GM10248 (cell line): ENCODE measurements at regions of chr6 and their contacts with region 1.

Region 1: GRCh38 chr6:26196846-26197648 is 109.8 kb downstream of the HFE start:
- DNase-seq: peak; percentile 87
- CTCF ChIP-seq: peak; percentile 11

Region 2: GRCh38 chr6:25743868-25744267 is 453.2 kb before region 1 on chr6:
- CTCF ChIA-PET with region 1: no interaction called
- POLR2A ChIA-PET with region 1: no interaction called
- DNase-seq: no peak
- CTCF ChIP-seq: no peak

Region 3: DNA sequence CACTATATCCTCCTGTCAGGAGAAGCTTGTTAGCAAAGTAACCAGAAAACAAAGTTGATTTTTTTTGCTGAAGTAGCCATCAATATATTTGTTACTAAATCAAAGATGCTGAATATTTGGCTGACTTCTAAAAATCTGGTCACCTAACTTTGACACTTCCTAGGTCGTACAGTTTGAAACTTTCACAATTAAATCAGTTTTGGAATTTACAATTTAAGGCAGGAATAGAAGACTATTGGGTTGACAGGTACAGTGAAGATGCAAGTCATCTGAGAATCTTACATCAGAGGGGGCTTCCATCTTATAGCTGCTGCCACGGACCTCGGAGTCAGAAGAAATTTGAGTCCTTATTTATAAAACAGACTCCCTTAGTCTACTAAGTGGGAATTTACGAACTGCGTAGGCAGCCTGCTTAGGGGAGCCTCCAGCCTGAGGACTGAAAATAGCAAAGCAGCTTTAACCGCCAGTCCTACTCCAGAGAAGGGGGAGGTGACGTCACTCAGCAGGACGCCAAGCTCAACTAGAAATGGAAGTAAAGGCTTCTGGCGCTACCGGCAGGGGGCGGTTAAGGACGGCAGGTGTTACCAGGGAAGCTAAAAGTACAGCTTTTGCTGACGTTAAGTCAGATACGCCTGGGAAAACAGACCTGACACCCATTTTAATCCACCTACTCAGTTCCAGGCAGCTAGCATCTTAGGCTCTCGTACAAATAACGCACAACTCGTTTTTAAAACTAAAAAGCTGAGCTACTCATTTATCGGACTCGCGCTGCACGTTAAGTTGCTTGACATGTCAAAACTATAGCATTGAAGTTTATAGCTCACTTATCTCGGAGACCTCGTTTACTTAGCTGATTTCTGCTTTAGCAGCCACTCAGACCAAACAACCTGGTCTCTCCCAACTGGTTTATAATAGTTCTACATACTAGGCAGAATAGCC is 170.9 kb before region 1 on chr6:
- CTCF ChIA-PET with region 1: interaction called, 3 read pairs
- POLR2A ChIA-PET with region 1: interaction called, 12 read pairs
- DNase-seq: peak; percentile 62
- CTCF ChIP-seq: peak; percentile 78

Region 4: DNA sequence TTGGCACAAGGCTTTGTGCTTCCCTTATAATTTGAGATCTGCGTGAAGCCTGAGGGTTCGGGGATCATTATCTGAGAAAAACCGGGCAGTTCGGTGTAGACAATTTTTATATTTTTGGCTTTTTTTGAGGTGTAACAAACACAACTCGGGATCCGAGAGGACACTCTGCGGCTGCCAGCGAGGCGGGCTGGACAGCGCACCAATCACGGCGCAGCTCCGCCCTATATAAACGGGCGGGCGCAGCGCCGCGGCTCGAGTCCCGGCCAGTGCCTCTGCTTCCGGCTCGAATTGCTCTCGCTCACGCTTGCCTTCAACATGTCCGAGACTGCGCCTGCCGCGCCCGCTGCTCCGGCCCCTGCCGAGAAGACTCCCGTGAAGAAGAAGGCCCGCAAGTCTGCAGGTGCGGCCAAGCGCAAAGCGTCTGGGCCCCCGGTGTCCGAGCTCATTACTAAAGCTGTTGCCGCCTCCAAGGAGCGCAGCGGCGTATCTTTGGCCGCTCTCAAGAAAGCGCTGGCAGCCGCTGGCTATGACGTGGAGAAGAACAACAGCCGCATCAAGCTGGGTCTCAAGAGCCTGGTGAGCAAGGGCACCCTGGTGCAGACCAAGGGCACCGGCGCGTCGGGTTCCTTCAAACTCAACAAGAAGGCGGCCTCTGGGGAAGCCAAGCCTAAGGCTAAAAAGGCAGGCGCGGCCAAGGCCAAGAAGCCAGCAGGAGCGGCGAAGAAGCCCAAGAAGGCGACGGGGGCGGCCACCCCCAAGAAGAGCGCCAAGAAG is 40.8 kb before region 1 on chr6:
- CTCF ChIA-PET with region 1: no interaction called
- POLR2A ChIA-PET with region 1: interaction called, 132 read pairs
- DNase-seq: peak; percentile 89
- CTCF ChIP-seq: no peak

Region 5: DNA sequence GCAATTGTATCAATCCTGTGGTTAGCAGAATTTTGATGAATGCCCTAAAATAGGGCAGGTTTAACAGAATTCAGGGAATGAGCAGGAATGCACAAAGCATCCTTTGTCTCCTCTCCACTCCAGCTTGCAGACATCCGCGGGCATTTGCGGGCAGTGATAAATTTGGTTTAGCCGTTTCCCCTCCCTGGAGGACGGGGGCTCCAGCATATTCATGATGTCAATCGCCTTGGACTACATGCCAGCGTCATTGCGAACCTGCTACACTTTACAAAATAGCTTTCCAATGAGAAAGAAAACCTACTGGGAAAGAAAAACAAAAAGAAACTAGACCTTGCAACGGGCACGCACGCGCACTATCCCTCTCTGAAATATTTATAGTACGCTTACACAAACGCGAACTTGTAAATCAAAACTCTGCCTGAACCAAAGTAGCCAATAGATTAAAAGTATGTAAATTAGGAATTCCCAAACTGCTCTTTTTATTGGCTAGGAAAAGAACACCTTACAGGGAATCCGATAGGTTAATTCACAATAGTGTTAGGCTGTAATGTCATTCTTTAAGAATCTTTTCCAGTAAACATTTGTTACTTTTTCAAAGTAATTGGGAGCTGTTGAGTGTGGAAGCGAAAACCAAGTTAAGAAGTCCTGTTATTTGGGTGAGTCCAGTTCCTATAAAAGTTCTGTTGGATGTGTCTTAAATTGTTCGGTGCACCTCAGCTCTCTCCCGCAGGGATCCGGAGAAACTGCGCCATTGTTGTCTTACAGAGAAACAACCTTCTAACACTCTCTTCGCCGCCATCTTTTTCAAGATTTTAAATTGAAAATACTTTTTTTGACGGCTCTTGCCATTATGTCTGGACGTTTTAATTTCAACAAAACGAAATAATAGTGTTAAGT is 26.9 kb after region 1 on chr6:
- CTCF ChIA-PET with region 1: interaction called, 4 read pairs
- POLR2A ChIA-PET with region 1: interaction called, 11 read pairs
- DNase-seq: peak; percentile 58
- CTCF ChIP-seq: no peak

Region 6: GRCh38 chr6:26270903-26271667 is 74.0 kb after region 1 on chr6:
- CTCF ChIA-PET with region 1: interaction called, 3 read pairs
- POLR2A ChIA-PET with region 1: interaction called, 57 read pairs
- DNase-seq: peak; percentile 91
- CTCF ChIP-seq: no peak

Region 7: GRCh38 chr6:27146706-27147505 is 949.9 kb after region 1 on chr6:
- CTCF ChIA-PET with region 1: no interaction called
- POLR2A ChIA-PET with region 1: interaction called, 13 read pairs
- DNase-seq: peak; percentile 95
- CTCF ChIP-seq: no peak